GM23248 (cell line): ENCODE measurements at regions of chr22 and their contacts with region 1.

Region 1: GRCh38 chr22:41106122-41106968 is 14.0 kb downstream of the EP300 start:
- DNase-seq: no peak
- H3K4me3 ChIP-seq: no peak overlapping the region
- H3K27ac ChIP-seq: peak overlapping the region; percentile 7; the same call in 1 of the 2 replicates
- H3K4me1 ChIP-seq: 0 out of 2 replicates have a peak, but pooled peaks cover 8% of the 10 kb centered on the region
- H3K27me3 ChIP-seq: no peaks in the 10 kb centered on the region

Region 2: DNA sequence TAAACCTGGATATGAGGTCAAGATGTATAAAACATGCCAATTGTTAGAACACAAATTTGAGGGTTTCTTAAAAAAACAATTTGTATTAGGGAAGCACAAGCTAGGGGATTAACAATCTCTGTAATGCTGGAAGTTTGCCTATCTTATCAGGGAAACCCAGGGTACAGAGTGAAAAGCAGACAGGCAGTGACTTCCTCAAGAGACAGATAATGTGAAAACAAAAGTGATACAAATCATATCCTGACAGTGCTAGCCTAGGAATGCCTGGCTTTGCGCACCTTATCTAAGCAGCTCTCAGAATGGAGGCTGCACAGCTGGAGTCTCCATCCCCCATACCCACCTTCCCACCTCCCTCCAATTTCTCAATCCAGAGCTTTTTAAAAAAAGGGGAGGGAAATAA is 177.7 kb before region 1 on chr22:
- in situ Hi-C with region 1: loop called (anchors 25 kb)
- DNase-seq: no peak
- H3K4me3 ChIP-seq: no peak overlapping the region
- H3K27ac ChIP-seq: no peak overlapping the region
- H3K4me1 ChIP-seq: no peaks in the 10 kb centered on the region
- H3K27me3 ChIP-seq: no peaks in the 10 kb centered on the region